Naive thymus-derived CD4-positive, alpha-beta T cell (primary cell): ENCODE measurements at regions of chr15 and their contacts with region 1.

Region 1: GRCh38 chr15:49169880-49170597 is at the start of gene GALK2:
- DNase-seq: peak; percentile 42 to 90 (median 75)
- ATAC-seq: peak; percentile 96
- H3K4me3 ChIP-seq: peak within 1 kb of the TSS; percentile 88
- H3K4me3 Mint-ChIP-seq: peak within 1 kb of the TSS; percentile 91 to 100 (median 98)
- H3K27ac ChIP-seq: peak within 1 kb of the TSS; percentile 88
- H3K27ac Mint-ChIP-seq: peak within 1 kb of the TSS; percentile 94 to 99 (median 98)
- H3K4me1 ChIP-seq: peaks cover 4 to 14% of the 10 kb centered on the region in 2 donors
- H3K4me1 Mint-ChIP-seq: peaks cover 24 to 56% (median 46%) of the 10 kb centered on the region in 7 donors
- H3K27me3 ChIP-seq: no peaks in the 10 kb centered on the region
- H3K27me3 Mint-ChIP-seq: no peaks in the 10 kb centered on the region
- total RNA-seq, gene GALK2: 19.4 to 36.6 (median 28.7) TPM

Region 2: DNA sequence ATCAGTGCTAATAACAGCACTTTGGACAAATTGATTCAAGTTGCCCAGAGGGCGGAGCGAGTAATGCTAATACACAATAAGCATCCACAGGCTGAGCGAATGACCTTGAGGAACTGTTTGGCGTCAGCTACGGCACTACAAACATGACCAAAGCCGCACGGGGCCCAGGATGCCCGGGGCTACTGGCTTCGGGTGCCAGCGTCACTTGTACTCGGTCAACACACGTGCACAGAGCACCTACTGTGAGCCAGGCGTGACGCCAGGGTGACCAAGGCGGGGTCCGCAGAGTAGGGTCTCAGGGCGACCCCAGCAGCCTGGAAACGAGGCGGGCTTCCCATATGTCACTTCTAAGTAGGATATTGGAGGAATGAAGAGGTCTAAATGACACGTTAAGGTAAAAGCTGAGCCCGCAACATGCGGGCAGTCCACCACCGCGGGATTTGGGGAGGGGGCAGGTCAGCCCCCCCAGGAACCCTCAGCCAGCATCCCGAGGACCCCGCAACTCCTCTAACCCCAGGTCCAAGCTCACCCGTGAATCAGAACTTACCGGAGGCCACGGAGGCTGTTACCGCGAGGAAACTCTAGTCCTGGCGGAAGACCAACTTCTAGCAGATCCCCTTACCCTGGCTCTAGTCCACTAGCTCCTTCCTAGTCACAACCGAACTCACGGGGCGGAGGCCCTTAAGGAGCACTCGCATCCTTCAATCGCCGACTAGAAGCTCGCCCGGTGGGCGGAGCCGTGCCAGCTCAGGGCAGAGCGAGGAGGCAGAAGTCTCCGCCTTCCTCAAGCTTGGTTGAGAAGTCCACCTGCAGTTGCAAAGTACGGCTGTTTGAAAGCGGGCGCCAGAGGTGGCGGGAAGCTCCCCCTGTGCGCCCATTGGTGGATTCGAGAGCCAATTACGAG is 359.4 kb before region 1 on chr15 and contains the start of gene CEP152:
- CTCF ChIA-PET with region 1: no interaction called
- POLR2A ChIA-PET with region 1: no interaction called
- intact Hi-C with region 1: loop called (anchors 1 to 5 kb)
- DNase-seq: peak; percentile 91 to 99 (median 98)
- ATAC-seq: peak; percentile 98
- H3K4me3 ChIP-seq: peak within 1 kb of the TSS; percentile 78
- H3K4me3 Mint-ChIP-seq: peak within 1 kb of the TSS; percentile 82 to 96 (median 89)
- H3K27ac ChIP-seq: peak within 1 kb of the TSS; percentile 76
- H3K27ac Mint-ChIP-seq: peak within 1 kb of the TSS; percentile 14 to 96 (median 87)
- H3K4me1 ChIP-seq: peaks cover 9 to 13% of the 10 kb centered on the region in 2 donors
- H3K4me1 Mint-ChIP-seq: peaks cover 12 to 38% (median 33%) of the 10 kb centered on the region in 7 donors
- H3K27me3 ChIP-seq: no peaks in the 10 kb centered on the region
- H3K27me3 Mint-ChIP-seq: peaks cover 0 to 24% (median 0%) of the 10 kb centered on the region in 5 donors
- total RNA-seq, gene CEP152: 6.2 to 26.3 (median 17.0) TPM

Region 3: GRCh38 chr15:48996276-48996675 is 173.8 kb before region 1 on chr15:
- CTCF ChIA-PET with region 1: no interaction called
- POLR2A ChIA-PET with region 1: no interaction called
- intact Hi-C with region 1: no loop called
- DNase-seq: no peak
- ATAC-seq: no peak
- H3K4me3 ChIP-seq: no peak overlapping the region
- H3K4me3 Mint-ChIP-seq: no peak overlapping the region
- H3K27ac ChIP-seq: no peak overlapping the region
- H3K27ac Mint-ChIP-seq: no peak overlapping the region
- H3K4me1 ChIP-seq: no peaks in the 10 kb centered on the region
- H3K4me1 Mint-ChIP-seq: peaks cover 0 to 3% (median 0%) of the 10 kb centered on the region in 7 donors
- H3K27me3 ChIP-seq: no peaks in the 10 kb centered on the region
- H3K27me3 Mint-ChIP-seq: no peaks in the 10 kb centered on the region

Region 4: GRCh38 chr15:49155110-49155833 is 14.8 kb before region 1 on chr15 and contains the start of gene COPS2:
- CTCF ChIA-PET with region 1: interaction called, 4 read pairs
- POLR2A ChIA-PET with region 1: interaction called, 32 read pairs
- intact Hi-C with region 1: loop called (anchors 1 kb)
- DNase-seq: peak; percentile 69 to 96 (median 94)
- ATAC-seq: peak; percentile 99
- H3K4me3 ChIP-seq: peak within 1 kb of the TSS; percentile 88
- H3K4me3 Mint-ChIP-seq: peak within 1 kb of the TSS; percentile 95 to 100 (median 98)
- H3K27ac ChIP-seq: peak within 1 kb of the TSS; percentile 93
- H3K27ac Mint-ChIP-seq: peak within 1 kb of the TSS; percentile 93 to 100 (median 97)
- H3K4me1 ChIP-seq: peaks cover 9 to 25% of the 10 kb centered on the region in 2 donors
- H3K4me1 Mint-ChIP-seq: peaks cover 40 to 72% (median 59%) of the 10 kb centered on the region in 7 donors
- H3K27me3 ChIP-seq: no peaks in the 10 kb centered on the region
- H3K27me3 Mint-ChIP-seq: no peaks in the 10 kb centered on the region
- total RNA-seq, gene COPS2: 51.0 to 91.5 (median 63.6) TPM

Region 5: GRCh38 chr15:50192926-50193620 is 1023.0 kb after region 1 on chr15:
- CTCF ChIA-PET with region 1: interaction called, 10 read pairs
- POLR2A ChIA-PET with region 1: no interaction called
- intact Hi-C with region 1: no loop called
- DNase-seq: no peak
- ATAC-seq: no peak
- H3K4me3 ChIP-seq: no peak overlapping the region
- H3K4me3 Mint-ChIP-seq: no peak overlapping the region
- H3K27ac ChIP-seq: no peak overlapping the region
- H3K27ac Mint-ChIP-seq: peak overlapping the region in 1 of 9 donors; percentile 33
- H3K4me1 ChIP-seq: no peaks in the 10 kb centered on the region
- H3K4me1 Mint-ChIP-seq: peaks cover 0 to 32% (median 0%) of the 10 kb centered on the region in 7 donors
- H3K27me3 ChIP-seq: no peaks in the 10 kb centered on the region
- H3K27me3 Mint-ChIP-seq: peaks cover 0 to 8% (median 0%) of the 10 kb centered on the region in 5 donors